Sciatic nerve (tissue), 2 donors: ENCODE measurements at regions of chr2 and their contacts with region 1.

Region 1: GRCh38 chr2:155368934-155369333 is 670.4 kb downstream of the KCNJ3 start:
- DNase-seq: no peak
- ATAC-seq: no peak

Region 2: DNA sequence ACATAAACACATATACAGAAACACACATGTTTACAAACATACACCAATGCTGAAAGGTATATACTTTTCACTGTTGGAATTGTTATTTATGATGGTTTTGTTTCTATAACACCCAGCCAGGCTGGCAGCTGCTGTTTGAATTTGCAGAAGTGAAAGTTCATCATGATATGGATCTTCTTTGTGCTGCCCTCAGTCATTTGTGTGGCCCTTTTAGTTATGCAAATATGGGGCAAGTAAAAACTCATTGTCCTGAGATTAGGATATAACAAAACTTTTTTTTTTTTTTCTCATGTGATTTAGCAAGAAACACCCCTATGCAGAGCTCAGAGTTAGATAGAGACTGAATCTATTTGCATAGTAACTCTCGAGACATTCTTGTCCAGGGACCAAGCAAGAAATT is 43.7 kb after region 1 on chr2:
- intact Hi-C with region 1: no loop called
- DNase-seq: no peak
- ATAC-seq: no peak

Region 3: DNA sequence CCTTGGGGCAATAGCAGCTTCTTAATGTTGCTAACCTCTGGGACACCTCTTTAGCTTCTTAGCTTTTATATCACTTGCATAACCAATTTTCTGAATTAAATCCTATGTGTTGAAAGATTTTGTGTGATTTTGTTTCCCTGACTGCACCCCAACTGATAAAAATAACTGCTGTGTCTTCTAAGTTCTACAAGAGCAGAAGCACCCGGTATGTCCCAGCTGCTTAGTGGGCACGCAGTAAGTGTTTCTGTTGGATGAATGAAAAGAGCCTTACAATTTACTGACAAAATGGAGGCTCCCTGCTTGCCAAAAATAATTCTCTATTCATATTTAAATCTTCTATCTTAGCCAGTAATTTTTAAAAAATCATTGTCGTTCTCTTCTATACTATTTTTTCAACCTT is 1835.5 kb after region 1 on chr2:
- intact Hi-C with region 1: loop called (anchors 5 kb)
- DNase-seq: no peak
- ATAC-seq: no peak